ENCODE measurements at regions of chr10 and their contacts with region 1.

Region 1: DNA sequence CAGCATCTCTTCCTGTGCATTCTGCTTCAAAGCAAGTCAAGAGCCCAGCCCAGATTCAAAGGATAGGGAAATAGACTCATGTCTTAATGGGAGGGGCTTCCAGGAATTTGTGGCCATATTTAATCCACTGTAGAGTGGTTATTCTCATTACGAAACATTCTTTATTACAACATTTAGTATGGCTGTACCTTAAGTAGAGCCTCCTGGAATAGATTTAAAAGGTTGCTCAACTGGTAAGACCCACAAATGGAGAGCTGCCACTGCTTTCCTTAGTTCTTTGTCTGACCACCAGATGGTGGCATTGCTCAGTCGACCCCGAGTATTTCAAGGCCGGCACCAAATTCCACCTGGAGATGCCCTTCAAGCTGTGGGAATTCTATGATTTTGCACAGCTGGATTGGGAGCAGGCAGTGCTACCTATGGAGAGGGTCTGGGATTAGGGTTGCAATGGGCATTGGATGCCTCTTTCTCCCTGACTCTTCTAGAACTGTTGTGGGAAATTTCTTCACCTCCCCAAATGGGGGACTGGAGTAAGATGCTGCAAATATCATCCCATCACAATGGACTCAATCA is 102.2 kb downstream of the RBM20 start:
- DNase-seq: peak; percentile 66
- ATAC-seq: peak; percentile 25
- H3K4me3 Mint-ChIP-seq: no peak overlapping the region
- H3K27ac Mint-ChIP-seq: no peak overlapping the region
- H3K4me1 Mint-ChIP-seq: peaks cover 76% of the 10 kb centered on the region
- H3K27me3 Mint-ChIP-seq: no peaks in the 10 kb centered on the region

Region 2: DNA sequence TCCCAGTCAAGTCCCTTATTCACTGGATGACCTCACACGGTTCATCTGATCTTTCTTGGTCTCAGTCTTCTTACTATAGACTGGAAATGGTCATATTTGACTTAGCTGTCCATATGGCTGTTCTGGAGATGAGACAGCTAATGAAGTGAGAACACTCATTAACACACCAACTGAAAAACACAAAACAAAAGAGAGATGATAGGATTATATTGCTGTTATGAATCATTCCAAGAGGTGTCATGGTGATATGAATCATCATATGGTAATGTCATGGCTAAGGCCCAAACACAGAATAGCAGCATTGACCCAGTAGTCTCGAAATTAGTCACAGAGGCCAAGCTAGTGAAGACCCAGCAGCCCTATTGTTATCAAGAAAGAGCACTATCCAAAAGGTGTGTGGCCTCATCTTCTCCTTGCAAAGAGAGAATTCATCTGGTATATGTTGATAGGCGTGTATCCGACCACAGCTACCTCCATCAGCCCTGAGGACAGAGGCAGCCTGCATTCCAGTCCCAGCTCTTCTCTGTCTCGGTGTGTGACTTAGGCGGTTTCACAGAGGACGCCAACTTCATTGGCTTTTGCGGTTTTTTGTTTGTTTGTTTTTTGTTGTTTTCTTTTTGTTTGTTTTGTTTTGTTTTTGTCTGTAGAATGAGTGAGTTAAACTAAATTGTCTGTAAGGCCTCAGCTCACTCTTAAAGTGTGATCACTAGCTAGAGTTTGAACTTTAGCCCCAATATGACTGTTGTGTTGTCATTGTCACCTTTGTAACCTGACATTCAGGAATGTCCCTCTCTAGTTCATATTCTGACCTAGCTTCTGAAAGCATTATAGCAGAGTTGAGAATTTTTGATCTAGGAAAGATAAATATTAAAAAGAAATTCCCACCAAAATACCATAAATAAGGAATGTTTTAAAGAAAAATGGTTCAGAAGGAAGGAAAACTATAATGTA is 28.0 kb after region 1 on chr10:
- CTCF ChIA-PET with region 1: interaction called, 4 read pairs
- POLR2A ChIA-PET with region 1: interaction called, 5 read pairs
- intact Hi-C with region 1: loop called (anchors 1 kb)
- DNase-seq: peak; percentile 67
- ATAC-seq: peak; percentile 94
- H3K4me3 Mint-ChIP-seq: peak overlapping the region; percentile 18
- H3K27ac Mint-ChIP-seq: peak overlapping the region; percentile 89
- H3K4me1 Mint-ChIP-seq: peaks cover 61% of the 10 kb centered on the region
- H3K27me3 Mint-ChIP-seq: peaks cover 2% of the 10 kb centered on the region

Region 3: DNA sequence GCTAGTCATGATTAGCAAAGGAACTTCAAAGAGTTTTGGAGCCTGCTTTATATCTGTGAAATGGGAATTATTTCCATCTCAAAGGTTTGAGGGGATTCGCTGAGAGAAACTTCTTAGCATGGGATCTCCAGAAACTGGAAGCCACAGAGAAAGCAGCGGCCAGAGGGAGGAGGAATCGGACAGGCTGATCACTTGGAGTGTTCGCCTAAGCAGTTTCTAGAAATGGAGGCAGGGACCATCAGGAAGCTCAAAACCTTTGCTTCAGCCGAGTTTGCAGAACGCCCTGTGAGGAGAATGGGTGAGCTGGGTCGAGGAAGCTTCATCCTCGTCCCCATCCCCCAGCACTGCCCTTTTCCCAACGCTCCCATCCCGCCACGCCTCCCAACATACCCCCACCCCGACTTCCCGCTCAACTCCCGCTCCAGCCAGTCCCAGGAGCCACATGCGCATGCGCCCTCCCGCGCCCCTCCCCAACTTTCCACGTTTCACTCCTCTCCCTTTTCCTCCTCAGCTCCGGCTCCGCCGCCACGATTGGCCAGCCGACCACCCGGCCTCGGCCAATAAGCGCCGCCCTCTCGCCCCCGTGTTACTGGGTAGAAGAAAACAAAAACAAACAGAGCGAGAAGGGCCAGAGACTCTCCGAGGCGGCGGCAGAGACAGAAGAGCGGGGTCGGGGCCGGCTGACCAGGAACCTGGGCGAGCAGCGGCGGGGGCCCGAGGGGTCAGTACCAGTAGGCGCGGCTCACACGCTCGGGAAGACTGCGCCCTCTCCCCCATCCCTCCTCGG is 125.2 kb after region 1 on chr10 and contains the start of gene PDCD4:
- CTCF ChIA-PET with region 1: interaction called, 3 read pairs
- POLR2A ChIA-PET with region 1: no interaction called
- intact Hi-C with region 1: loop called (anchors 1 to 2 kb)
- DNase-seq: peak; percentile 97
- ATAC-seq: peak; percentile 85
- H3K4me3 Mint-ChIP-seq: peak within 1 kb of the TSS; percentile 87
- H3K27ac Mint-ChIP-seq: peak within 1 kb of the TSS; percentile 95
- H3K4me1 Mint-ChIP-seq: peaks cover 63% of the 10 kb centered on the region
- H3K27me3 Mint-ChIP-seq: no peaks in the 10 kb centered on the region
- total RNA-seq, gene PDCD4: 69.8 to 125 TPM

Region 4: DNA sequence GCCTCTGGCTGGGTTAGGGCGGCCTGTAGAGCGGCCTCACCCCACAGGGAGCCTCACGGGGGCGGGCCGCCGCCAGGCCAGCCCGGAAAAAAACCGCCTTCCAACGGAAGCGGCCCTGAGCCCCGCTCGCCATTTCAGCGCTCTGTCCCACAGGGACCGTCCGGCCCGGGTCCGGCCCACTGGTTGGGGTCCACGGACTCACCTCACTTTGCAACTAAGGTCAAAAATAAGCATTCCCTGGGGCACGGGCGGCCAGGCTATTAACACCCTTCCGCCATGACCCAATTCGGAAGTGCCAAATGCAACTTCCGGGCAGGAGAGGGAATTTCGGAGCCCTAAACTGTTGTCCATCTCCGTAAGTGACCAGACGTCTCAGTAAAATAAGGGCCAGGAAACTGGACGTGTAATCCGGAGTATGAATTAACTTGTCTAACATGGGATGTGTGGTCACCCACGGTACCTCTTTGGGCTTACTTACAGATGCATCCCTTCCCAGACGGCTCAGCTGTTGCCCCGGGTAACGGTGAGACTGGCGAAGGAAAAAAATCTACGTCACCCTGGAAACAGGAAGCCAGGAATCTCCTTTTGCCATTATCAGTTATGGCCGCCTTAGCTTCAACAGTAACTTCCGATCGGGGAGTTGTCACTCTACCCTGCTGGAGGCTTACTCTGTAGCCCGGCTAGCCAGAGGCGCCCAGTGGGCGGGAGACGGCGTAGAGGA is 172.5 kb after region 1 on chr10 and contains the start of gene BBIP1:
- CTCF ChIA-PET with region 1: interaction called, 3 read pairs
- POLR2A ChIA-PET with region 1: no interaction called
- intact Hi-C with region 1: loop called in 1 of 2 experiments (anchors 2 kb)
- DNase-seq: no peak
- ATAC-seq: peak; percentile 93
- H3K4me3 Mint-ChIP-seq: peak within 1 kb of the TSS; percentile 96
- H3K27ac Mint-ChIP-seq: peak within 1 kb of the TSS; percentile 98
- H3K4me1 Mint-ChIP-seq: peaks cover 41% of the 10 kb centered on the region
- H3K27me3 Mint-ChIP-seq: no peaks in the 10 kb centered on the region
- total RNA-seq, gene BBIP1: 34.3 to 48.8 TPM

Region 5: DNA sequence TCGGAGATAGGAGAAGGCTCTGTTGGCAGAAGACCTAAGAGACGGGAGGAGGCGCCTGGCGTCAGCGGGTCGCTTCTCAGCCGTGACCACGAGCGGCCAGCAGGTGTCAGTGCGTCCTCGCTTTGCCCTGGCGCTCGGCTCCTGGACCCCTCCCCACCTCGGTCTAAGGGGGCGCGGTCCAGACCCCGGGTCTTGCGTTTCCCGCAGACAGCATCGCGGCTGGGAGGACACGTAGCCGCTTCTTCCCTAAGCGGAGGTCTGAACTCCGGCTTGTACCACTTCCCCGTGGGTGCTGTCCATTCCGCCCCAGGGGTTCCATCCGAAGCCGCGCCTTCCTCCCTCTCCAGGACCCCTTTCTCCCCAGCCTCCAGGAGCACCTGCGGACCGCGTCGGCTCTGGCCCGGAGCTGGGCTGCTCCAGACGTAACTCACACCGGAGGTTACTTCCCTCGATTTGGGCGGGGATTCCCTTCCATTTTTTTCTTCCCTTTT is 329.9 kb after region 1 on chr10:
- CTCF ChIA-PET with region 1: interaction called, 5 read pairs
- POLR2A ChIA-PET with region 1: no interaction called
- intact Hi-C with region 1: loop called (anchors 5 kb)
- DNase-seq: peak; percentile 78
- ATAC-seq: peak; percentile 81
- H3K4me3 Mint-ChIP-seq: peak overlapping the region; percentile 52
- H3K27ac Mint-ChIP-seq: no peak overlapping the region
- H3K4me1 Mint-ChIP-seq: peaks cover 9% of the 10 kb centered on the region
- H3K27me3 Mint-ChIP-seq: peaks cover 66% of the 10 kb centered on the region

Region 6: GRCh38 chr10:111360260-111360925 is 614.1 kb after region 1 on chr10:
- CTCF ChIA-PET with region 1: no interaction called
- POLR2A ChIA-PET with region 1: no interaction called
- intact Hi-C with region 1: loop called in 1 of 2 experiments (anchors 5 kb)
- DNase-seq: peak; percentile 20
- ATAC-seq: peak; percentile 65
- H3K4me3 Mint-ChIP-seq: no peak overlapping the region
- H3K27ac Mint-ChIP-seq: no peak overlapping the region
- H3K4me1 Mint-ChIP-seq: no peaks in the 10 kb centered on the region
- H3K27me3 Mint-ChIP-seq: peaks cover 10% of the 10 kb centered on the region